CD8-positive, alpha-beta T cell (primary cell): ENCODE measurements at regions of chr1 and their contacts with region 1.

Region 1: GRCh38 chr1:181142096-181142958 is 53.8 kb downstream of the IER5 start:
- DNase-seq: peak; percentile 76 to 94 (median 88)
- ATAC-seq: peak; percentile 99
- H3K4me3 ChIP-seq: no peak overlapping the region
- H3K4me3 Mint-ChIP-seq: no peak overlapping the region
- H3K27ac ChIP-seq: no peak overlapping the region
- H3K27ac Mint-ChIP-seq: peak overlapping the region; percentile 19
- H3K4me1 ChIP-seq: peaks cover 17% of the 10 kb centered on the region
- H3K4me1 Mint-ChIP-seq: peaks cover 25% of the 10 kb centered on the region
- H3K27me3 ChIP-seq: no peaks in the 10 kb centered on the region
- H3K27me3 Mint-ChIP-seq: no peaks in the 10 kb centered on the region
- CTCF ChIP-seq: peak; percentile 98

Region 2: GRCh38 chr1:179856296-179856695 is 1286.0 kb before region 1 on chr1:
- CTCF ChIA-PET with region 1: no interaction called
- POLR2A ChIA-PET with region 1: no interaction called
- intact Hi-C with region 1: no loop called
- DNase-seq: no peak
- ATAC-seq: no peak
- H3K4me3 ChIP-seq: no peak overlapping the region
- H3K4me3 Mint-ChIP-seq: no peak overlapping the region
- H3K27ac ChIP-seq: no peak overlapping the region
- H3K27ac Mint-ChIP-seq: no peak overlapping the region
- H3K4me1 ChIP-seq: no peaks in the 10 kb centered on the region
- H3K4me1 Mint-ChIP-seq: peaks cover 3% of the 10 kb centered on the region
- H3K27me3 ChIP-seq: no peaks in the 10 kb centered on the region
- H3K27me3 Mint-ChIP-seq: no peaks in the 10 kb centered on the region
- CTCF ChIP-seq: no peak

Region 3: DNA sequence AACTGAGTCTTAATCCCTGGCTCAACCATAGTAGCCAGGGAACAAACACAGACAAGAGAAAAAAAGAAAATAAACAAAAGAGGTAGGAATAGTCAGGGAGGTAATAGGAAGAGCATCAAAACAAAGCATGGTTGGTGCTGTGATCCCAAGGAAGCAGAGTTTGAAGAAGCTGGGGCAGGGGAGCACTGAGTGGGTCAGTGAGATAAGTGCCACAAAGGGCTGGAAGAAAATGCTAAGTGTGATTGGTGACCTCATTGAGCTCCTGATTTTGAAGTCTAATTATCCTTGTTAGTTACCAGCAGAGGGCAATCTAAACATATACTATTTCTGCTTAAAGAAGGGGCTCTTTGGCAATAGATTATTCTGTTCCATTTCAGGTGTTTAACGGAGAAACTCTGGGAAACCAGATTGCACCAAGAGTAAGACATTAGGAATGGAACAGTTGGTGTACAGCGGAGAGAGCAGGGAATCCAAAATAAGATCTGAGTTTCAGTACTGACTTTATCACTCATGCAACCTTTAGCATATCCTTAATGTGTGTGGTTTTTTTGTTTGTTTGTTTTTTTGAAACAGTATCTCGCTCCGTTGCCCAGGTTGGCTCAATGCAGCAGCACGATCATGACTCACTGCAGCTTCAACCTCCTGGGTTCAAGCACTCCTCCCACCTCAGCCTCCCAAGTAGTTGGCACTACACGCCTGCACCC is 260.4 kb before region 1 on chr1:
- CTCF ChIA-PET with region 1: interaction called, 6 read pairs
- POLR2A ChIA-PET with region 1: no interaction called
- intact Hi-C with region 1: loop called (anchors 1 kb)
- DNase-seq: peak in 2 of 9 experiments; percentile 5 to 28
- ATAC-seq: no peak
- H3K4me3 ChIP-seq: no peak overlapping the region
- H3K4me3 Mint-ChIP-seq: no peak overlapping the region
- H3K27ac ChIP-seq: no peak overlapping the region
- H3K27ac Mint-ChIP-seq: no peak overlapping the region
- H3K4me1 ChIP-seq: no peaks in the 10 kb centered on the region
- H3K4me1 Mint-ChIP-seq: no peaks in the 10 kb centered on the region
- H3K27me3 ChIP-seq: no peaks in the 10 kb centered on the region
- H3K27me3 Mint-ChIP-seq: no peaks in the 10 kb centered on the region
- CTCF ChIP-seq: no peak

Region 4: DNA sequence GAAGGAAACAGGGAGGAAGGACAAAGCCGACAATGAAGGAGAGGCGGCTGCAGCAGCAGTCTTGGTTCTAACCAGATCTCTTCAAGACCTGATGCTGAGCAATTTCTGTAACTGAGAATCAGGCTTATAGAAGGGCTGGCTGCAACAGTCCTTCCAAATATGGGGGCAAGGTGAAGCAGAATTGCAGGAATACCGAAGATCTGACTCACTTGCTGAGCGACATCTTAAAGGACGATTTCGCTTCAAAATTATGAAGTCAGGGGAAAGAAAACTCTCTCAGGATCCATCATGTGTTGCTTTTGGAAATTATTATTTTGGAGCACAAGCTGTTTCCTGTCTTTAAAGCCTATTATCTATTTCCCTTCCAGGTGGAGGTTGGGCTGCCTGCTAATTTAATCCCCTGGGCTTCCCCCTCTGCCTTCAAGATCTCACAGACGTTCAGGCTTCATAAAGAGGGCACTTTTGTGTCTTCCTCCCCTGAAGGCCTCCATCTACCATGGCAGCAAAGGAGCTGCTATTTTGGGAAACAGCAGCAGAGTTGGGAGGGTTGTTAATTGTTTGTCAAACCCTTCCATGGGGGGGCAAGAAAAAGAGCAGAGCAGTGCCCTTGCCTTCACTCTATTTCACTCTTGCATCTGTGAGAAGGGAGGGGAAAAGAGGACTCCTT is 64.6 kb before region 1 on chr1:
- CTCF ChIA-PET with region 1: interaction called, 217 read pairs
- POLR2A ChIA-PET with region 1: no interaction called
- intact Hi-C with region 1: no loop called
- DNase-seq: no peak
- ATAC-seq: no peak
- H3K4me3 ChIP-seq: no peak overlapping the region
- H3K4me3 Mint-ChIP-seq: no peak overlapping the region
- H3K27ac ChIP-seq: no peak overlapping the region
- H3K27ac Mint-ChIP-seq: no peak overlapping the region
- H3K4me1 ChIP-seq: no peaks in the 10 kb centered on the region
- H3K4me1 Mint-ChIP-seq: no peaks in the 10 kb centered on the region
- H3K27me3 ChIP-seq: no peaks in the 10 kb centered on the region
- H3K27me3 Mint-ChIP-seq: peaks cover 21% of the 10 kb centered on the region
- CTCF ChIP-seq: no peak

Region 5: GRCh38 chr1:181105134-181106021 is 36.9 kb before region 1 on chr1:
- CTCF ChIA-PET with region 1: interaction called, 78 read pairs
- POLR2A ChIA-PET with region 1: interaction called, 5 read pairs
- intact Hi-C with region 1: loop called (anchors 2 kb)
- DNase-seq: peak; percentile 80 to 96 (median 94)
- ATAC-seq: peak; percentile 85
- H3K4me3 ChIP-seq: peak overlapping the region; percentile 61 to 76
- H3K4me3 Mint-ChIP-seq: peak overlapping the region; percentile 90
- H3K27ac ChIP-seq: peak overlapping the region; percentile 52 to 74
- H3K27ac Mint-ChIP-seq: peak overlapping the region; percentile 91
- H3K4me1 ChIP-seq: peaks cover 25% of the 10 kb centered on the region
- H3K4me1 Mint-ChIP-seq: peaks cover 40% of the 10 kb centered on the region
- H3K27me3 ChIP-seq: no peaks in the 10 kb centered on the region
- H3K27me3 Mint-ChIP-seq: no peaks in the 10 kb centered on the region
- CTCF ChIP-seq: no peak

Region 6: GRCh38 chr1:181152892-181153633 is 10.7 kb after region 1 on chr1:
- CTCF ChIA-PET with region 1: interaction called, 333 read pairs
- POLR2A ChIA-PET with region 1: interaction called, 4 read pairs
- intact Hi-C with region 1: no loop called
- DNase-seq: peak in 1 of 9 experiments; percentile 22
- ATAC-seq: no peak
- H3K4me3 ChIP-seq: no peak overlapping the region
- H3K4me3 Mint-ChIP-seq: no peak overlapping the region
- H3K27ac ChIP-seq: no peak overlapping the region
- H3K27ac Mint-ChIP-seq: no peak overlapping the region
- H3K4me1 ChIP-seq: peaks cover 49% of the 10 kb centered on the region
- H3K4me1 Mint-ChIP-seq: peaks cover 48% of the 10 kb centered on the region
- H3K27me3 ChIP-seq: no peaks in the 10 kb centered on the region
- H3K27me3 Mint-ChIP-seq: no peaks in the 10 kb centered on the region
- CTCF ChIP-seq: no peak